ENCODE measurements at regions of chr15 and their contacts with region 1.

Region 1: GRCh38 chr15:70741107-70741531 is 22.2 kb downstream of the UACA start:
- DNase-seq: peak; percentile 58
- H3K4me3 ChIP-seq: no peak overlapping the region
- H3K27ac ChIP-seq: peak overlapping the region; percentile 43
- H3K27me3 ChIP-seq: no peaks in the 10 kb centered on the region
- CTCF ChIP-seq: no peak

Region 2: GRCh38 chr15:70690491-70691257 is 50.4 kb before region 1 on chr15:
- CTCF ChIA-PET with region 1: interaction called, 13 read pairs
- POLR2A ChIA-PET with region 1: no interaction called
- DNase-seq: no peak
- H3K4me3 ChIP-seq: no peak overlapping the region
- H3K27ac ChIP-seq: no peak overlapping the region
- H3K27me3 ChIP-seq: no peaks in the 10 kb centered on the region
- CTCF ChIP-seq: no peak

Measured in AG04450 (cell line).